WTC11 (cell line): ENCODE measurements at regions of chr13 and their contacts with region 1.

Region 1: GRCh38 chr13:95624020-95624419 is 20.5 kb downstream of the DZIP1 start:
- DNase-seq: peak; percentile 14
- ATAC-seq: peak; percentile 100
- H3K4me3 Mint-ChIP-seq: no peak overlapping the region
- H3K27ac Mint-ChIP-seq: peak overlapping the region; percentile 60
- H3K4me1 Mint-ChIP-seq: peaks cover 6% of the 10 kb centered on the region
- H3K27me3 Mint-ChIP-seq: no peaks in the 10 kb centered on the region
- CTCF ChIP-seq: peak; percentile 55; the same call in 1 of the 2 replicates

Region 2: GRCh38 chr13:95463531-95463930 is 160.5 kb before region 1 on chr13:
- CTCF ChIA-PET with region 1: no interaction called
- POLR2A ChIA-PET with region 1: no interaction called
- DNase-seq: no peak
- ATAC-seq: no peak
- H3K4me3 Mint-ChIP-seq: no peak overlapping the region
- H3K27ac Mint-ChIP-seq: no peak overlapping the region
- H3K4me1 Mint-ChIP-seq: peaks cover 7% of the 10 kb centered on the region
- H3K27me3 Mint-ChIP-seq: no peaks in the 10 kb centered on the region; the same call in 1 of the 2 replicates
- CTCF ChIP-seq: no peak

Region 3: GRCh38 chr13:95568131-95568530 is 55.9 kb before region 1 on chr13:
- CTCF ChIA-PET with region 1: no interaction called
- POLR2A ChIA-PET with region 1: no interaction called
- DNase-seq: no peak
- ATAC-seq: no peak
- H3K4me3 Mint-ChIP-seq: no peak overlapping the region
- H3K27ac Mint-ChIP-seq: no peak overlapping the region
- H3K4me1 Mint-ChIP-seq: peaks cover 5% of the 10 kb centered on the region
- H3K27me3 Mint-ChIP-seq: no peaks in the 10 kb centered on the region
- CTCF ChIP-seq: no peak

Region 4: GRCh38 chr13:95644601-95645052 is 20.6 kb after region 1 on chr13 and contains the start of gene DZIP1:
- CTCF ChIA-PET with region 1: interaction called, 18 read pairs
- POLR2A ChIA-PET with region 1: interaction called, 3 read pairs
- DNase-seq: peak; percentile 92
- ATAC-seq: peak; percentile 86
- H3K4me3 Mint-ChIP-seq: peak within 1 kb of the TSS; percentile 89
- H3K27ac Mint-ChIP-seq: no peak within 1 kb of the TSS
- H3K4me1 Mint-ChIP-seq: peaks cover 19% of the 10 kb centered on the region
- H3K27me3 Mint-ChIP-seq: peaks cover 9% of the 10 kb centered on the region
- CTCF ChIP-seq: no peak
- total RNA-seq, gene DZIP1: 31.0 to 33.5 TPM (median 32.0 TPM) in 3 replicates

Region 5: DNA sequence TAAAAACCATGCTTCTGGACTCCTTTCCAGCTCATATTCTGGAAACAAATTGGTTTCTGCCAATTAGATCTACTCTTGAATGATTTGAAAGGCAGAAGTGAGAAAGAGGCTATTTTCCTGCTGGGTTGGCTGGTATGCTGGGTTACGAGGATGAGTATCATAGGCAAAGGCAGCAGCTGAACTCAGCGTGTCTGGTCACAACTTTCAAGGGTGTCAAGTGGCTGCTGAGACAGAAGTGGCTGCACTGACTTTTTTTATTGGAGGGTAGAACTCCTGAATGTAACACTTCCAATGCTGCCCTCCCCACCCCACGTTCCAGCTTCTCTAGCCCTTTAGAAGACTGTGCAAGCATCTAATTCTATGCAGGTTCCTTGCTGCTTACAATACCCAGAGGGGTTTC is 28.8 kb after region 1 on chr13:
- CTCF ChIA-PET with region 1: interaction called, 11 read pairs
- POLR2A ChIA-PET with region 1: interaction called, 4 read pairs
- DNase-seq: no peak
- ATAC-seq: no peak
- H3K4me3 Mint-ChIP-seq: no peak overlapping the region
- H3K27ac Mint-ChIP-seq: no peak overlapping the region
- H3K4me1 Mint-ChIP-seq: peaks cover 9% of the 10 kb centered on the region
- H3K27me3 Mint-ChIP-seq: peaks cover 4% of the 10 kb centered on the region; the same call in 1 of the 2 replicates
- CTCF ChIP-seq: no peak

Region 6: GRCh38 chr13:95660981-95661581 is 37.1 kb after region 1 on chr13:
- CTCF ChIA-PET with region 1: interaction called, 78 read pairs
- POLR2A ChIA-PET with region 1: no interaction called
- DNase-seq: no peak
- ATAC-seq: peak; percentile 24; the same call in 1 of the 2 replicates
- H3K4me3 Mint-ChIP-seq: no peak overlapping the region
- H3K27ac Mint-ChIP-seq: no peak overlapping the region
- H3K4me1 Mint-ChIP-seq: no peaks in the 10 kb centered on the region
- H3K27me3 Mint-ChIP-seq: peaks cover 7% of the 10 kb centered on the region; the same call in 1 of the 2 replicates
- CTCF ChIP-seq: peak; percentile 28; the same call in 1 of the 2 replicates

Region 7: GRCh38 chr13:95704510-95704909 is 80.5 kb after region 1 on chr13:
- CTCF ChIA-PET with region 1: interaction called, 15 read pairs
- POLR2A ChIA-PET with region 1: no interaction called
- DNase-seq: no peak
- ATAC-seq: peak; percentile 67
- H3K4me3 Mint-ChIP-seq: no peak overlapping the region
- H3K27ac Mint-ChIP-seq: no peak overlapping the region
- H3K4me1 Mint-ChIP-seq: peaks cover 6% of the 10 kb centered on the region
- H3K27me3 Mint-ChIP-seq: no peaks in the 10 kb centered on the region
- CTCF ChIP-seq: no peak

Region 8: GRCh38 chr13:95834134-95834765 is 210.2 kb after region 1 on chr13:
- CTCF ChIA-PET with region 1: interaction called, 100 read pairs
- POLR2A ChIA-PET with region 1: no interaction called
- DNase-seq: peak; percentile 63
- ATAC-seq: peak; percentile 86
- H3K4me3 Mint-ChIP-seq: no peak overlapping the region
- H3K27ac Mint-ChIP-seq: no peak overlapping the region
- H3K4me1 Mint-ChIP-seq: peaks cover 4% of the 10 kb centered on the region
- H3K27me3 Mint-ChIP-seq: no peaks in the 10 kb centered on the region; the same call in 1 of the 2 replicates
- CTCF ChIP-seq: peak; percentile 82